Ascending aorta (tissue), 2 donors: ENCODE measurements at regions of chr15 and their contacts with region 1.

Region 1: DNA sequence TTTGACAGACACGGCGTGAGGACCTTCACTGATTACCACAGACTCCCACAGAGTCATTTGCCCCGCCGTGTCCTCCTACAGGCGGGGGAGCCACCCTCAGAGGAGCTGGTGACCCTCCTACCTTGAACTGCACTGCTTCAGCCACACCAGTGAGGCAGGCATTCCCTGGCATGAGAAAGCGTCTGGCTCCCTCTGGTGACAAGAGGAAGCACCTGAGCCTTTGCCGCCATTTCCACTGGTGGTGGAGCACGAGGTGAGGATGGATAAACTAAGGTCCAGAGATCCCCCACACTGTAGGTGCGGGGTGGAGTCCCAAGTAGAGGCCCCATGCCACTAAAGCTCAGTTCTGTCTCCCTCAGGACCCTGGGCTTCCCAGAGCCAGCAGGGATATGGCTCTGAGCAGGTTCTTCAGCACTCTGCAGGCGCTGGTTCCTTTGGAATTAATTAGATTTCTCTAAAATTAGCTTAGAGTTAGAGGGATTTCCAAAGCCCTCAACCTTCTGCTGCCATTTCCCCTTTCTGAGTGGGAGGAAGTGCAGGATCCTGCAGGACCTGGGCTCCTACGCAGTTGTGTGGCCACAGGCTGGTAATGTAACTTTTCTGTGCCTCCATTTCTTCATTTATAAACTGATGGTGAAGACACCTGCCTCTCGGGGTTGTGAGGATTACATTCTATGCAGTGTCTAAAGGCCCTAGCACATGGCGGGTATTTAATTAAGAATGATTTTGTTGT is 224.0 kb downstream of the SLCO3A1 start:
- DNase-seq: peak in 1 of 2 donors; percentile 86
- H3K4me3 ChIP-seq: no peak overlapping the region
- H3K27ac ChIP-seq: no peak overlapping the region
- H3K4me1 ChIP-seq: peaks cover 0 to 8% of the 10 kb centered on the region in 2 donors
- H3K27me3 ChIP-seq: no peaks in the 10 kb centered on the region
- CTCF ChIP-seq: peak; percentile 74 to 84 (median 78)

Region 2: DNA sequence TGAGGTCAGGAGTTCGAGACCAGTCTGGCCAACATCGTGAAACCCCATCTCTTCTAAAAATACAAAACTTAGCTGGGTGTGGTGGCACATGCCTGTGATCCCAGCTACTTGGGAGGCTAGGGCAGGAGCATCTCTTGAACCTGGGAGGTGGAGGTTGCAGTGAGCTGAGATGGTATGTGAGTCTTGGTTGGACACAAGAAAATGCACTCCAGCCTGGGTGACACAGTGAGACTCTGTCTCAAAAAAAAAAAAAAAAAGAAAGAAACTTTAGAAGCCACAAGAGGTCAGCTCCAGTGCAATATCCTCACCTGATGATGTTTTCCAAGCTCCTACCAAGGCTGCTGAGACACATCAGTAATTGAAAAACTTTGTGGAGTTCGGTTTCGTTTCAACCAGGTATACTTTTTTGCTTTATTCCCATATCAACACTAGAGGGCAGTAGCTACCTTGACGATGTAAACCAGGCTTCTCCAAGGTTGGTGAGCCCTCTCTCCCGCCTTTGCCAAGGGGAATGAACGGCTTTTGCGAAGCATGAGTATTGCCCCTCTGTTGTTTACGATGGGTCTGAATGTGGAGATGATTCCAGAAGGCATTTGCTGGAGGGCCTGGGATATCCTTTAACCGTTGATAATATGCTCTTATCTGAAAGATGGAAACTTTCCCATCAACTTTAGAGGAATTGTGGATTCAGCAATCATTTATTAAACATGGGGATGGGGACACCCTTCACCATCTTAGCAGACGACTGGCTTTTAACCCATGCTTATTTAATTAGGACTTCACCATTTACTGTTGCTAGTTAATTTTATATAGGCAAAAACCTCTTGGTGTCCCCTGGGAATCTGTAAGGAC is 774.7 kb before region 1 on chr15:
- intact Hi-C with region 1: loop called (anchors 2 kb)
- DNase-seq: no peak
- H3K4me3 ChIP-seq: no peak overlapping the region
- H3K27ac ChIP-seq: no peak overlapping the region
- H3K4me1 ChIP-seq: no peaks in the 10 kb centered on the region
- H3K27me3 ChIP-seq: no peaks in the 10 kb centered on the region
- CTCF ChIP-seq: peak; percentile 39 to 67 (median 54)

Region 3: GRCh38 chr15:91706322-91707032 is 371.0 kb before region 1 on chr15:
- intact Hi-C with region 1: loop called (anchors 5 kb)
- DNase-seq: peak; percentile 30 to 84
- H3K4me3 ChIP-seq: peak overlapping the region in 1 of 2 donors; percentile 20
- H3K27ac ChIP-seq: peak overlapping the region in 1 of 2 donors; percentile 12
- H3K4me1 ChIP-seq: no peaks in the 10 kb centered on the region
- H3K27me3 ChIP-seq: no peaks in the 10 kb centered on the region
- CTCF ChIP-seq: peak; percentile 59 to 73 (median 71)

Region 4: DNA sequence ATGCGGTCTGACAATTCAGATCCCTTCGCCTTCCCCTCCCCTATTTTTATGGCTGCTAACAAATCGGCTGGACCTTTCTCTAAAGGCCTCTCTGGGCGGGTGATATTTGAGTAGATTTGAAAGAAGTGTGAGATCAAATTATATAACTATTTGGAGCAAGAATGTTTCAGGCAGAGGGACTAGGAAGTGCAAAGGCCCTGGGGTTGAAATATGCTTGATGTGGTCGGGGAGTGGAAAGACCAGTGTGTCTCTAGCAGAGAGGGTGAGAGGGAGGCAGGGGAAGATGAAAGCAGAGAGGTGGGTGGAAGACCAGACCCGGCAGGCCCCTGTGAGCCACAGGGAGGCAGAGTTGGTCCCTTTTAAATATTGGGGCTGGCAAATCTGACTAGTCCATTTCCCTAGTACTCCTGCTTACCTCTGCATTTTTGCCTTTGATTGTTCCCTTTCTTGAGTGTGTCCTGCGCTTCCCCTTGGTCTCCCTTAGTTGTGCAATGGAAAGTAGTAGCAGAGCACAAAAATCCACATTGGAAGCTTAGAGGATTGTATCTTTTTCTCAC is 191.7 kb before region 1 on chr15:
- intact Hi-C with region 1: loop called (anchors 1 kb)
- DNase-seq: no peak
- H3K4me3 ChIP-seq: no peak overlapping the region
- H3K27ac ChIP-seq: no peak overlapping the region
- H3K4me1 ChIP-seq: peaks cover 0 to 5% of the 10 kb centered on the region in 2 donors
- H3K27me3 ChIP-seq: no peaks in the 10 kb centered on the region
- CTCF ChIP-seq: no peak

Region 5: DNA sequence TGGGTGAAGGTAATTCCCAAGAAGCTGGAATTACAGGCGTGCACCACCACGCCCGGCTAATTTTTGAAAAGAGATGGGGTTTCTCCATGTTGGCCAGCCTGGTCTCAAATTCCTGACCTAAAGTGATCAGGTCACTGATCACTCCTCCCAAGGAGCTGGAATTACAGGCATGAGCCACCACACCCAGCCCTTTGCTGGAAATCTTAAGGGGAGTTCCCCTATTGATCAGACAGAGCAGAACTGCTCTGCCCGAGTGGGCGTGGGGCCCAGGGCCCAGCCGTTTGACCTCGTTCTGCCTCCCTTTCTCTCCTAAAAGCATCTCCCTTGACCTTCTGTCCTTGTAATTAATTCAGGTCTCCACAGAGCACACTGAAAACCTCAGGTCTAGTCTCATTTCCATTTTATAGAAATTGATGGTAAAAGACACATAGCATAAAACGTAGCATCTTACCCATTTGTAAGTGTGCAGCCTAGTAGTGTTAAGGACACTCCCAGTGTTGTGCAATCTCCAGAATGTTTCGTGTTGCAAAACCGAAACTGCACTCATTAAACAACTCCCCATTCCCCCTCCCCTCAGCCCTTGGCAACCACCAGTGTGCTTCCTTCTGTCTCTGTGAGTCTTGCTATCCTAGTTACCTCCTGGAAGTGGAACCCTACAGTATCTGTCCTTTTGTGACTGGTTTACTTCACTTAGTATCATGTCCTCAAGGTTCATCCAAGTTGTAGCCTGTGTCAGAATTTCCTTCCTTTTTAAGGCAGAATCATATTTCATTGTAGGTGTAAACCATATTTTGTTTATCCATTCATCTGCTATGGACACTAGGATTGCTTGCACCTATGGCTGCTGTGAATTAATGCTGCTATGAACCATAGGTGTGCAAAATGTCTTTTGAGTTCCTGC is 134.6 kb before region 1 on chr15:
- intact Hi-C with region 1: loop called (anchors 5 kb)
- DNase-seq: peak; percentile 51 to 90
- H3K4me3 ChIP-seq: peak overlapping the region; percentile 2 to 18
- H3K27ac ChIP-seq: peak overlapping the region; percentile 12 to 40
- H3K4me1 ChIP-seq: peaks cover 13 to 57% of the 10 kb centered on the region in 2 donors
- H3K27me3 ChIP-seq: no peaks in the 10 kb centered on the region
- CTCF ChIP-seq: no peak